GM18951 (cell line): ENCODE measurements at regions of chr1 and their contacts with region 1.

Region 1: DNA sequence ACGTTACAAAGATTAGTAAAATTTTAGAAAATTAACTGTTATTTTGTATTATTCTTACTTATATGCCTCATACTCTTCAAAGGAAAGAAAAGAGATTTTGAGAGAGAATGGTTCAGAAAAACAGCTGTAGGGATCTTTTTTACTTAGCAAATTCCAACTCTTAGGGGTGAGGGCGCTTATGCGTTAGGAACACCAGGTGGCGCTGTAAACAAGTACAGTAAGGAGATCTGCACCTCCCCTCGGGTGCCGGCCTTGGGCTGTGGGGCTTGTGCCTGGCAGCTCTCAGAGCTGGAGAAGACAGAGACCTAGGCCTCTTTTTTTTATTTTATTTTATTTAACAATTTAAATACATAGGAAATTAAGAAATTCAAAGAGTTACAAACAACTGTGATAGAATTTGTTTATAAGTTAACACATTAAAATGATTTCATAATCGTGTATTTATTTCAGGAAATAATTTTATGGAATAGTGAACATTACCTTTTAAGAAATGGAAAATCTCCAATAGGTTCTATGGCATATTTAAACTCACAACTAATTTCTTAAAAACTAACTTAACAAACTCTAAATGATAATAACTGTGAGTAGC is 32.6 kb downstream of the UTP25 start:
- POLR2A ChIP-seq: no peak

Region 2: GRCh38 chr1:209627732-209628196 is 232.6 kb before region 1 on chr1:
- in situ Hi-C with region 1: no loop called
- POLR2A ChIP-seq: no peak

Region 3: GRCh38 chr1:209989525-209989924 is 129.1 kb after region 1 on chr1:
- in situ Hi-C with region 1: loop called (anchors 25 kb)
- POLR2A ChIP-seq: no peak

Region 4: DNA sequence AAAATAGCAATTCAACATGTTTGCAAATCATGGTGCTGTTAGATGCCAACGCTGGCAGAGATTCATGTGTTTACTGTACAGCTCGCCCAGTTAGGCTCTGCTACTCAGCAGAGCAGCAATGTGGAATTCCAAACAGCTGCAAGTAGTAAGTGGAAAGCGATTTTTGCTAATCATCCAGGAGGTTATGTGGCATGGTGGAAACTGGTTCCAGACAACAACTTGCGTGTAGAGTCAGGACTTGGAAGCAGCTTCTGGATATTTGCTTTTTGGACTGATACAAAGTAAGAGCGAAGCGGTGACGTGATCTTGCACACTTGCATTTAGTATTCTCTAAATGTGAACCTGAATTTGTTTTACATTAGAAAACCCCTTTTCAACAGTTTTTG is 441.2 kb after region 1 on chr1:
- in situ Hi-C with region 1: loop called (anchors 25 kb)
- POLR2A ChIP-seq: no peak

Region 5: DNA sequence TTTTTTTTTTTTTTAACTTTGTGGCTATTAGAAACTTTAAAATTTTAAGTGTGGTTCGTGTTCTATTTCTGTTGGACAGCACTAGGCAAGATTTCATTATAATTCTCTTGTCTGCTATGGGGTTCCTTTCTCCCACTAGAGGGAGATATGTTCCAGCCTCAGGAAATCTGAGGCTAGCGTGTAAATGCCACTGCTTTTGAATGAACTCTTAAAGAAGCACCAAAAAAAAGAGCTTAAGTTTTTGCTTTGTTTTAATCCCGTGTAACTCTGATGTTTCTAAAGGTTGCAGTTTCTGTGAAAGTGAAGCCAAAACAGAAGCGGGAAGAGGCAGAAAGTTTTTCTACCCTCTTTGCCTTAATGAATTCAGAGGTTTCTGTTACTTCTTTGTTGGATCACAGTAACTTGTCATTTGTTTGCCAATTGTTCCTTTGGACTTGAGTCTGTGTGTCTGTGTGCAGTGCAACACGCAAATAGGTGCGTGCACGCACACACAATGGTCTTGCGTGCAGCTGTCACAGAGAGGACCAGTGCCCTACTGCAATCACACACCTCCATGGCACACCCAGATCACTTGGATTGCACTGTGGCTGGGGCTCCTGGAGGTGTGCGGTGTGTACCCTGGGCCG is 500.6 kb after region 1 on chr1:
- in situ Hi-C with region 1: no loop called
- POLR2A ChIP-seq: no peak